ENCODE measurements at regions of chr15 and their contacts with region 1.

Region 1: DNA sequence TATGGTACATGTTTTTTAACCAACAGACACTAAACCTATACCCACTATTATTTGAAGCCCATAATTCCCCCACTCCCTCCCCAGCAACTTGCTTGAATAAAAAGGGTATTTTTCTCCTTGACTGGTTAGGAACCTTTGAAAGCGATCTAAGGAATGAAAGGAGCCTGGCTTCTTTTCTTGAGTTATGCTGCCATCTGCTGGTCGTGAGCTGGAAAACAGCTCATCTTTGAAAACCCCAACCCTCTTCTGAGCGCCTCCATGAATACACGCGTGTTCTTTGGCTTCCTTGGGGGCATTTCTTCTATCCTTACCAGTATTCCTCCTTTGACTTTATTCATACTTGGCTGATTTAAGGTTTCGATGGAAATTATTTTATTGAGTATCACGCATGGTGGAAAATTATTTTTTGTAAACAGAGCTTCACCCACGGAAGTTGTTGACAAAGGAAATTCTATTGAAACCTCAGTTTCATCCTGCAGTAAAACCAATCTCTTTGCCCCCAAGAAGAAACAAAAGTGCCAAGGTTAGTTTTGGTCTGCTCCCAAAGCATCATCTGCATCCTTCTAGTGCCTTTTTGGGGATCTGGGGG is 171.6 kb downstream of the SV2B start:
- DNase-seq: peak; percentile 10
- H3K4me3 ChIP-seq: no peak overlapping the region
- CTCF ChIP-seq: peak; percentile 55

Region 2: DNA sequence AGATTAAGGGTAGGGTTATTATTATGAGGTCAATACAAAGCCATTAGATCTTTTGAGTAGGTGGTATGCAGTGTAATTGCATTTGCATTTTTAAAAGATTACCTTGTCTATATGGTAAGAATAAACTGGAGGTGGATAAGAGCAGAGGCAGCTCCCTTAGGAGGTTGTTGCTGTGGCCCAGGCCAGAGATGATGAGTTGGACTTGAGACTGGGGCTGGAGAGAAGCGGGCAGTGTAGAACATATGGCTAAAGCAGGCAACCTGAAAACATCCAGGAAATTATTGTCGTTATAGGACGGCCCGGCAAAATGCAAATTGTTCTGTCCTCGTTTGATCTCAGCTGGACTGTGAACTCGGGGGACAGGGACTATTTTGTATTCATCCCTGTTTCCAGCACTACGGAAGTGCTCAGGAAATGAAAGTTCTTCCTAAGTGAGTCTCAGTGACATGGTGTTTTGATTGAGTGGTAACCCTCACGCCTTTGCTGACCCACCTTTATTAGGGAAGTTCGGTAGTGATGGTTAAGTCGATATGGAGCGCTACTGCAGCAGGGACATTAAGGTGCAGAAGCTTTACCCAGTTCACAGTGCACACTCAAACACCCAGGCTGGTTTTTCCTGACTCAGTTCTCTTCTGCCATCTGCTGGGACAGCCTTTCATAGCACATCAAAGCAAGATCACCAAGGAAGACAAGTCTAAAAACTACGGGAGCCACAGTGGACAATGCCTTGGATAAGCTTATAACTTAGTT is 222.1 kb before region 1 on chr15:
- CTCF ChIA-PET with region 1: interaction called, 138 read pairs
- POLR2A ChIA-PET with region 1: no interaction called
- DNase-seq: no peak
- H3K4me3 ChIP-seq: no peak overlapping the region; the same call in 1 of the 2 replicates
- CTCF ChIP-seq: peak; percentile 66

Region 3: DNA sequence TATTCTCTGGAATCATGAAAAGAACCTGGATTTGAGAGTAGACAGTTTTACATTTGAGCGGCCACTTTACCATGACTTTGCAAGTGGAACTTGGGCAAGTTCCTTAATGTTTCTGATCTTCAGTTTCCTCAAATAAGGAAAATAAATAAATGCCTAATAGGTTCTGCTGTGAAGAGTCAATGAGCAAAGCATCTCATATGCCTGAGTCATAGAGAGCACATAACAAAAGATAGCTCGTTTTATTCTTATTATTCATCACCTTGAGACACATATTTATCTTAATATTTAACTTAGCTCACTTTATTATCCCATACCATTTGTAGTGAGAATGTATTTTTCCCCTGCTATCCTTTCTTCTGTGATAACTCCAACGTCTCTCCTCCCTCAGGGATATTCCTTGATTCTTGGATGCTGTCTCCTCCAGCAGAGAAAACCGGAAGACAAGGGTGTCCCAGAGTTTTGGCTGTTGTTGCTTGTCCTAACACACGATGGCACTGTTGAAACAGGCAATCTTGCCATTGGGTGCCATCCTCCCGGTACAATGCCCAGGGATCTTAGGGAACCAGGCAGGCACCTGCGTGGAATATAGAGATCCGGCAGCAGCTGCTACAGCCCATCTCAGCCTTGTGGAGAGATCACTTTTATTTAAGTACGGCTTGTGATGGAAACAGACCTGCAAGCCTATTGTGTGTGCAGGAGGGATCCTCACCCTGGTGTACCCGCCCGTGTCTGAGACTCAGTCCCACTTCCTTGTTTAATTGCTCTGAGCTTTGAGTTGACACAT is 215.9 kb before region 1 on chr15:
- CTCF ChIA-PET with region 1: interaction called, 138 read pairs
- POLR2A ChIA-PET with region 1: no interaction called
- DNase-seq: no peak
- H3K4me3 ChIP-seq: no peak overlapping the region
- CTCF ChIP-seq: peak; percentile 80

Region 4: GRCh38 chr15:91258425-91258779 is 13.3 kb before region 1 on chr15:
- CTCF ChIA-PET with region 1: interaction called, 21 read pairs
- POLR2A ChIA-PET with region 1: no interaction called
- DNase-seq: no peak
- H3K4me3 ChIP-seq: no peak overlapping the region
- CTCF ChIP-seq: no peak

Region 5: DNA sequence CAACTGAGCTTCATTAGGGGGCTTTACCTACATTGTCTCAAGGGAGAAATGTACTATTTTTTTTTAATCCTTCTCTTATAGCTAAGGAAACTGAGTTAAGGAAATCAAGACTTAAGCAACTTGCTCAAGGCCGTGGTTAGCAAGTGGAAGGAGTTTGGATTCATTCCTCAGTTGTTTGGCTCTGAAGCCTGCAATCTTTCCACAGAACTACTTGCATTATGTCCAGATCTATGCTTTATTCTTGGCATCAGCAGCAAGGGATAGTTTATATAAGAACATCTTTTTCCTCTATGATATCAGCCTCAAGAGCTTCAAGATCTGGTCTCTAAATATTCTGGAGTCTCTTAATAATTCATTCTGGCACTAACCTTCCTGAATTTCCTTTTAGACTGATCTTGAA is 10.8 kb after region 1 on chr15:
- CTCF ChIA-PET with region 1: interaction called, 16 read pairs
- POLR2A ChIA-PET with region 1: no interaction called
- DNase-seq: no peak
- H3K4me3 ChIP-seq: no peak overlapping the region
- CTCF ChIP-seq: no peak

Measured in AG04449 (cell line).